IMR-90 (cell line): ENCODE measurements at regions of chr12 and their contacts with region 1.

Region 1: DNA sequence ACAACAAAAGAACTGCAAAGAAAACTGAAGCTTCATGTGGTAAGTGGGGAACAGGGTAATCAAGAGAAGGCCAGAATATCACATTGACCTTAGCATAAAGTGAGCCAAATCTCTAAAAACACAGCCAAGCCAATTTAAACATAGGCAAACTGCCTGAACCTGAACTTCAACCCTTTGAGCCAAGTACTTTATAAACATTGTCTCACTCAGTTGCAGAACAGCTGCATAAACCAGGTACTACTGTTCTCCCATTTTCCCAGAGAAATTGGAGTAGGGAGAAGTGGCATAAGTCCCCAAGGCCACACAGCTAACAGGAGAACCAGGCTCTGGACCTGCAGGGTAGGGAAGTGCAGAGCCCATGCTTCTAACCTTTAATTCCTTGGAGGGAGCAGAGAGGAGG is 30.4 kb upstream of the FKBP4 start:
- DNase-seq: no peak
- ATAC-seq: no peak
- H3K4me3 ChIP-seq: no peak overlapping the region
- H3K27ac ChIP-seq: no peak overlapping the region
- H3K4me1 ChIP-seq: no peaks in the 10 kb centered on the region
- H3K27me3 ChIP-seq: peaks cover 45% of the 10 kb centered on the region
- CTCF ChIP-seq: no peak
- POLR2A ChIP-seq: no peak
- RAD21 ChIP-seq: no peak

Region 2: DNA sequence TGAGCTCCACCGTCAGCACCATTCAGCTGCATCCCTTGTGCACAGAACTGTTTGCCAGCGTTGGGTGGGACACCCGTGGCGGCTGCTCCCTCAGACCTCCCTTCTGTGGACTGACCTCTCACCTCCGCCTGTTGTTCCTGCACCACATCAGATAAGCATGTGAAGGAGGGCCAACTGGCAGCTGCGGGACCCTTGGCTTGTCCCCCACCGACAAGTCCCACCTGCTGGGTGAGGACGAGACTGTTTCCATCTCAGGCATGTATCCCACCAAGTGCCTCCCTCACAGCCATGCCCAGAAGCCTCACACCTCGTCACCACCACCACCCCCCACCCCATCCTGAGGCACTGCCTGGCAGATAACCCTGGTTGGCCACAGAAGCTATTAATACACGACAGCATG is 176.2 kb after region 1 on chr12:
- CTCF ChIA-PET with region 1: no interaction called
- POLR2A ChIA-PET with region 1: no interaction called
- dilution Hi-C with region 1: no loop called
- in situ Hi-C with region 1: no loop called
- intact Hi-C with region 1: no loop called
- DNase-seq: no peak
- ATAC-seq: no peak
- H3K4me3 ChIP-seq: no peak overlapping the region
- H3K27ac ChIP-seq: no peak overlapping the region
- H3K4me1 ChIP-seq: peaks cover 5% of the 10 kb centered on the region; the same call in 1 of the 2 replicates
- H3K27me3 ChIP-seq: no peaks in the 10 kb centered on the region
- CTCF ChIP-seq: no peak
- POLR2A ChIP-seq: no peak
- RAD21 ChIP-seq: no peak

Region 3: GRCh38 chr12:2988494-2988893 is 224.1 kb after region 1 on chr12:
- CTCF ChIA-PET with region 1: no interaction called
- POLR2A ChIA-PET with region 1: interaction called, 13 read pairs
- dilution Hi-C with region 1: no loop called
- in situ Hi-C with region 1: no loop called
- intact Hi-C with region 1: no loop called
- DNase-seq: no peak
- ATAC-seq: no peak
- H3K4me3 ChIP-seq: no peak overlapping the region
- H3K27ac ChIP-seq: no peak overlapping the region
- H3K4me1 ChIP-seq: no peaks in the 10 kb centered on the region
- H3K27me3 ChIP-seq: no peaks in the 10 kb centered on the region
- CTCF ChIP-seq: no peak
- POLR2A ChIP-seq: no peak
- RAD21 ChIP-seq: no peak